ENCODE measurements at regions of chr19 and their contacts with region 1.

Region 1: GRCh38 chr19:8615813-8616596 is 5.5 kb upstream of the ADAMTS10 start:
- DNase-seq: peak; percentile 65
- ATAC-seq: no peak
- H3K4me3 Mint-ChIP-seq: no peak overlapping the region
- H3K27ac Mint-ChIP-seq: peak overlapping the region; percentile 49
- H3K4me1 Mint-ChIP-seq: peaks cover 17% of the 10 kb centered on the region
- H3K27me3 Mint-ChIP-seq: peaks cover 5% of the 10 kb centered on the region

Region 2: DNA sequence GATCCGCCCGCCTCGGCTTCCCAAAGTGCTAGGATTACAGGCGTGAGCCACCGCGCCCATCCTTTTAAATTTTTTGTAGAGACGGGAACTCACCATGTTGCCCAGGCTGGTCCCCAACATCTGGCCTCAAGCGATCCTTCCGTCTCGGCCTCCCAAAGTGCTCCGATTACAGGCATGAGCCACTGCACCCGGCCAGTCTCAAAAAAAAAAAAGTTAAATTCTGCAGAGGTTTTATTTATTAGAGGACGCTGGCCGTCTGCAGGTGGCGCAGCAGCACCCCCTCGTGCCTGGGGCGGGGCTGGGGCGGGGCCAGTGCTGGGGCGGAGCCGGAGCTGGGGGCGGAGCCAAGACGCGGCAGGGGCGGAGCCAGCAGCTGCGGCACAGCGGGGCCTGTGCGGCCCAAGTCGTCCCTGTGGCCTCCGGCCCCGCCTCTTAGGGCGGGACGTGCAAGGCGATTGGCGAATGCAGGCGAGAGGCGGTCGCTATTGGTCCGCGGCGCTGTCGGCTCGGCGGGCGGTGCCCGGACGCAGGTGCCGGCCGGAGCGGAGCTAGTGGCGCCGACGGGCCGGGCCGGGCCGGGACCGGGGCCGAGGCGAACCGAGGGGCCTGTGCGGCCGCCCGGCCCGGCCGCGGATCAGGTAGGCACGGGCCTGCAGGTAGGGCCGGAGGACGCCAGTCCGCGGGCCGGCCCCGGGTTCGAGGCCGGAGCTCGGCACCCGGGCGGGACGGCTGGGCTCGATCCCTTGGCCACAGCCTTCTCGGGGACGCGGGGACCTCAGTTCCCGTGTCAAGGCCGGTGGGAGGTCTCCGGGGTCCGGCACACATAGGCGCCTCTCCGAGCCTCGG is 203.0 kb before region 1 on chr19 and contains the start of gene MARCHF2:
- CTCF ChIA-PET with region 1: no interaction called
- POLR2A ChIA-PET with region 1: no interaction called
- DNase-seq: peak; percentile 96
- ATAC-seq: peak; percentile 100
- H3K4me3 Mint-ChIP-seq: peak within 1 kb of the TSS; percentile 60
- H3K27ac Mint-ChIP-seq: no peak within 1 kb of the TSS
- H3K4me1 Mint-ChIP-seq: peaks cover 13% of the 10 kb centered on the region
- H3K27me3 Mint-ChIP-seq: no peaks in the 10 kb centered on the region
- total RNA-seq, gene MARCHF2: 26.8 to 28.1 TPM

Region 3: DNA sequence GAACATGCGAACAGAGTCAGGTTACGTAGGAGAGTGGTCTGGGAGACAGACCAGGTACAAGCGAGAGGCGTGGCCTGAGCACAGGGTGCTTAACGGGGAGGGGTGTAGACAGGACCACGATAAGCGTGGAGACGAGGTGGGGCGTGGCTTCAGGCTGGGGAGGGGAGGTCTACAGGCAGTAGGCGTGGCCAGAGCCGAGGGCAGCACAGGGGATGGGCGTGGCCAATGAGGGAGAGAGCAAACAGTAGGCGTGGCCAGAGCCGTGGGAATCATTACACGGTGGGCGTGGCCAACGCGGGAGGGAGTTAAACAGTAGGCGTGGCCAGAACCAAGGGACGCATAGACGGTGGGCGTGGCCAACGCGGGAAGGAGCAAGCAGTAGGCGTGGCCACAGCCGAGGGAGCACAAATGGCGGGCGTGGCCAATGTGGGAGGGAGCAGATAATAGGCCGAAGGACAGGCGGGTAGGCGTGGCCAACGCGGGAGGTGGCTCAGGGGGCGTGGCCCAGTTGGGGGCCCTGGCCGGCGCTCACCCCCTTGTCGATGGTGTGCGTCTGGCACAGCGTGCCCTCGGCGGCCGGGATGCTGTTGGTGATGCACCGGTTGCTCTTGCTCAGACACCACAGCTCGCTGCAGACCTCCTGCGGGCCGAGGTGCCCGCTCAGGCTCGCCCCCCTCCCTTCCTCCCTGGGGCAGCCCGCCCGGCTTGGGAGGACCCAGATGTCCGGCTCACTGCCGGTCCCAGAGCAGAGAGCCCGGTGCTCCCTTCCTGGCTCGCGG is 23.6 kb before region 1 on chr19:
- CTCF ChIA-PET with region 1: interaction called, 15 read pairs
- POLR2A ChIA-PET with region 1: no interaction called
- DNase-seq: peak; percentile 83
- ATAC-seq: peak; percentile 88
- H3K4me3 Mint-ChIP-seq: peak overlapping the region; percentile 53
- H3K27ac Mint-ChIP-seq: no peak overlapping the region
- H3K4me1 Mint-ChIP-seq: peaks cover 10% of the 10 kb centered on the region
- H3K27me3 Mint-ChIP-seq: peaks cover 12% of the 10 kb centered on the region

Measured in activated CD8-positive, alpha-beta T cell treated with anti-CD3 and anti-CD28 coated beads, Interleukin-2, amount 10 ng/mL, durations not matched to agents 7 days and 5 days (primary cell).